ENCODE measurements at regions of chr6 and their contacts with region 1.

Region 1: DNA sequence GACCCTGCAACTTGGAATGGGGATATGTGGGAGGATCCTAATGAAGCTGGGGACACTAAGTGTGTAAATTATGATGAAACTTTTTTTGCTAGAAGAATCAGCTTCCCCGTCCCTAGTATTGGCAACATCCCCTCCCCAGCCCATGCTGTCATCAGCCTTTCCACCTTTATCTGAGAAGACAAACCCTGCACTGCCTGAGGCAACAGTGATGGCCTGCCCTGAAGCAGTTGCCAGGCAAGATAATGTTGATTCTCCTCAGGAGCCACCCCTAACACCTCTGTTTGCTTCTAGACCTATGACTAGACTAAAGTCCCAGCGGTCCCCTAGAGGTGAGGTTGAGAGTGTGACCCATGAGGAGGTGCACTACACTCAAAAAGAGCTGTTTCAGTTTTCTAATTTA is 27.1 kb downstream of the MICA start:
- DNase-seq: no peak
- ATAC-seq: no peak
- H3K4me3 Mint-ChIP-seq: no peak overlapping the region
- H3K27ac Mint-ChIP-seq: no peak overlapping the region
- H3K4me1 Mint-ChIP-seq: no peaks in the 10 kb centered on the region
- H3K27me3 Mint-ChIP-seq: peaks cover 2% of the 10 kb centered on the region

Region 2: GRCh38 chr6:31441365-31442267 is 11.2 kb after region 1 on chr6:
- CTCF ChIA-PET with region 1: interaction called, 14 read pairs
- POLR2A ChIA-PET with region 1: interaction called, 4 read pairs
- intact Hi-C with region 1: no loop called
- DNase-seq: peak; percentile 90
- ATAC-seq: peak; percentile 93
- H3K4me3 Mint-ChIP-seq: no peak overlapping the region
- H3K27ac Mint-ChIP-seq: no peak overlapping the region
- H3K4me1 Mint-ChIP-seq: peaks cover 5% of the 10 kb centered on the region
- H3K27me3 Mint-ChIP-seq: peaks cover 30% of the 10 kb centered on the region

Measured in activated CD4-positive, alpha-beta T cell treated with anti-CD3 and anti-CD28 coated beads for 36 hours (primary cell).